ENCODE measurements at regions of chr17 and their contacts with region 1.

Region 1: GRCh38 chr17:75405365-75406221 is at the start of gene GRB2:
- DNase-seq: peak; percentile 100
- ATAC-seq: peak; percentile 84 to 95 (median 88)
- H3K4me3 ChIP-seq: peak within 1 kb of the TSS; percentile 99
- H3K4me3 Mint-ChIP-seq: peak within 1 kb of the TSS; percentile 92
- H3K27ac ChIP-seq: peak within 1 kb of the TSS; percentile 89
- H3K27ac Mint-ChIP-seq: peak within 1 kb of the TSS; percentile 86 to 93
- H3K4me1 ChIP-seq: peaks cover 27% of the 10 kb centered on the region
- H3K4me1 Mint-ChIP-seq: peaks cover 43 to 45% of the 10 kb centered on the region in 2 donors
- H3K27me3 ChIP-seq: no peaks in the 10 kb centered on the region
- H3K27me3 Mint-ChIP-seq: peaks cover 0 to 2% of the 10 kb centered on the region in 2 donors
- CTCF ChIP-seq: no peak
- total RNA-seq, gene GRB2: 115 to 142 (median 116) TPM

Region 2: DNA sequence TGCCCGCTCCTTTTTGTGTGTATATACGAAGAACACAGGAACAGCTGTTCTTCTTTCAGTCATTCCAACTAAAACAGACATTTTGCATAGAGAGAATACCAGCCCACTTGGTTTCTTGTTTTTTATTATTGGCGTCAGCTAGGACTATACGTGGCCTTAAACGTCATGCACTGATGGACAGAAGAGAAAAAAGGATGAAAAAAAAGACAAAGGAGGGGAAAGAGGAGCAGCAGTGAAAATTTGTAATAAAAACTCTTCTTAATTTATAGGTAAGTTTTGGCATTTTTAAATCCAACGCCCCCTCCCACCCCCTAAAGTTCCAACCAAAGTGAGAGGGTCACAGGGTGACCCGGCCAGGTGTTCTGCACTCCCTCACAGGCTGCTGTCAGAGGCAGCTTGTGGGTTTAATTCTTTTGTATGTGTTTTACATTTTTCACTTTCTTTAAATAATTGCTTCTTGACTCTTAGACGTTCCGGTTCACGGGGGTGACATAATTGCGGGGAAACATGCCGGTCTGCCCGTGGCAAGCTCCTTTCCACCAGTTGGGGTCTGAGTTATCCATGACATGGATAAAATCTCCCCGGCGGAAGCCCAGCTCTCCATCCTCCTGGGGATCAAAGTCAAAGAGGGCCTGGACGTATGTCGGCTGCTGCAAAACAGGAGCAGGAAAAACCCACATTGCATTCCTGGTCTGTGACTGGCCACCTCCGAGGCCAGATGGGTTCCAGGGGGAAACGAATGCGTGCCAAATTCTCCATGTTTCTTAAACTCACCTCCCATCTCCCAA is 85.5 kb before region 1 on chr17:
- intact Hi-C with region 1: loop called (anchors 1 kb)
- DNase-seq: no peak
- ATAC-seq: no peak
- H3K4me3 ChIP-seq: no peak overlapping the region
- H3K4me3 Mint-ChIP-seq: no peak overlapping the region
- H3K27ac ChIP-seq: peak overlapping the region; percentile 51
- H3K27ac Mint-ChIP-seq: no peak overlapping the region
- H3K4me1 ChIP-seq: peaks cover 36% of the 10 kb centered on the region
- H3K4me1 Mint-ChIP-seq: peaks cover 7 to 12% of the 10 kb centered on the region in 2 donors
- H3K27me3 ChIP-seq: no peaks in the 10 kb centered on the region
- H3K27me3 Mint-ChIP-seq: no peaks in the 10 kb centered on the region
- CTCF ChIP-seq: no peak

Region 3: DNA sequence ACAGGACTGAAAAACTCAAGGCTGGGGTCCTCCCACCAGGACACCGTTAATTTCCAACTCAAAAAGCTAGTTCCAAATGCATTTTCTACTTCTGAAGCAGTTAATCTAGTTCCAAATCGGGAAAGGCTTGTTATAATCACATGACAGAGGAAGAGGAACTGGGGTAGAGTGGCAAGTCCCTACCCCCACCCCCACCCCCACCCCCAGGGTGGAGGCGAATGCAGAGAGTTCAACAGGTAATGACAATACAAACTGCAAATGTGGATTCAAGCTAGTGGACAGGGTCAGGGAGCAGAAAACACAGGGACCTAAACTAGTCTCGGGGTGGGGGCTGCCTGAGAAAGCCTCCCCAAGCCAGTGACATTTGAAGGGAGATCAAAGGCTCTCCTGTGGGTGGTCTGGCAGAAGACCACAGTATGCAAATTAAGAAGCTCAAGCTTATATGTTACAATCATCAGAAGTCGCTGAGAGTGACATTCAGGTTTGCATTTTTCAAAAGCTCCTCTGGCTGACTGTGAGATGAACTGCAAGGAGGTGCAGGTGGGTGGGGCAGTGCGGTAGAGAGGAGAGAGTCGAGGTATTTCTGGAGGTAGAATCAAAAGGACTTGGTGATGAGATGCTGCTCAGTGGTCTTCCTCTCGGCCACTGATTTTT is 60.0 kb before region 1 on chr17:
- intact Hi-C with region 1: loop called (anchors 5 kb)
- DNase-seq: peak in 1 of 2 donors; percentile 75
- ATAC-seq: peak; percentile 30 to 50 (median 41)
- H3K4me3 ChIP-seq: peak overlapping the region; percentile 5
- H3K4me3 Mint-ChIP-seq: peak overlapping the region; percentile 83
- H3K27ac ChIP-seq: peak overlapping the region; percentile 84
- H3K27ac Mint-ChIP-seq: peak overlapping the region; percentile 78 to 91
- H3K4me1 ChIP-seq: peaks cover 73% of the 10 kb centered on the region
- H3K4me1 Mint-ChIP-seq: peaks cover 77 to 88% of the 10 kb centered on the region in 2 donors
- H3K27me3 ChIP-seq: no peaks in the 10 kb centered on the region
- H3K27me3 Mint-ChIP-seq: no peaks in the 10 kb centered on the region
- CTCF ChIP-seq: no peak

Region 4: GRCh38 chr17:75393523-75394331 is 11.9 kb before region 1 on chr17:
- intact Hi-C with region 1: loop called (anchors 1 kb)
- DNase-seq: peak; percentile 80 to 88
- ATAC-seq: peak; percentile 97 to 98 (median 97)
- H3K4me3 ChIP-seq: peak overlapping the region; percentile 54
- H3K4me3 Mint-ChIP-seq: peak overlapping the region; percentile 94
- H3K27ac ChIP-seq: peak overlapping the region; percentile 55
- H3K27ac Mint-ChIP-seq: peak overlapping the region; percentile 62 to 88
- H3K4me1 ChIP-seq: peaks cover 18% of the 10 kb centered on the region
- H3K4me1 Mint-ChIP-seq: peaks cover 71 to 73% of the 10 kb centered on the region in 2 donors
- H3K27me3 ChIP-seq: no peaks in the 10 kb centered on the region
- H3K27me3 Mint-ChIP-seq: no peaks in the 10 kb centered on the region
- CTCF ChIP-seq: no peak